SK-N-SH (cell line): ENCODE measurements at regions of chr17 and their contacts with region 1.

Region 1: DNA sequence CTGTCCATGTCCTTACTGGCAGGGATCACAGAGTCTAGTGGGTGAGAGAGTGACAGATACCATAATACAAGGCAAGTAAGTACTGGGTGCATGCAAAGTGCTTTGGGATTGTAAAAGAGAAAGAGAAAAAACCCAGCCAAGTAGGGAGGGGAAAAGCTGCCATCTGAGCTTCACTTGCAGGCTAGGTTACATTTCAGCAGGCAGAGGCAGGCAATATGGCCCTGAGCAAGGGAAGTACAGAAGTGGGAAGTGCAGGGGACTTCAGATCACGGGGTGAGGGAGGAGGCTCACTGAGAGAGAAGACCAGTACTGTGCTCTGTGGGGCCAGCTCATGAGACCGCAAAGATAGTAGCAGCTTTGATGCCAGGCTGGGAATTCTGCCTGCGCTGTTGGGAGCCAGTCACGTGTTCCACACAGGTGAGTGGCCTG is 230.6 kb downstream of the MSI2 start:
- DNase-seq: no peak
- H3K4me3 ChIP-seq: no peak overlapping the region
- H3K27ac ChIP-seq: peak overlapping the region in 1 of 2 experiments; percentile 75; a peak in 2 of 4 replicates
- H3K4me1 ChIP-seq: peaks cover 35 to 80% of the 10 kb centered on the region in 2 experiments
- H3K27me3 ChIP-seq: no peaks in the 10 kb centered on the region
- CTCF ChIP-seq: no peak
- EP300 ChIP-seq: no peak
- RAD21 ChIP-seq: no peak

Region 2: DNA sequence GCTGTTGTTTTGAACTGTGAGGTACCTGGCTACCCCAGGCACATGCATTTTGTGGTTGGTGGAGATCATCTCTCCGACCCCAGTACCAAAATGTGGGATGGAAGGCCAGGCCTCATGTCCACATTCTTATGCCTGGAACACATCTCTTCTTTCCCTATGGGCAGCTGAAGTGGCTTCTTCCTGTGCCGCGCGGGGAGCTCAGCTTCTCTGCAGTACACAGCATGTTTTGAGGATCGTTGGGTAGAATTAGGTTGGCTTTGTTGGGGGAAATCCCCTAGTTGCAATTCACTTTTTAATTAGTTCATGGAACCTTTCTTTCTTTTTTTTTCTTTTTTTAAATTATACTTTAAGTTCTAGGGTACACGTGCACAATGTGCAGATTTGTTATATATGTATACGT is 11.6 kb after region 1 on chr17:
- CTCF ChIA-PET with region 1: interaction called, 6 read pairs
- POLR2A ChIA-PET with region 1: interaction called, 11 read pairs
- DNase-seq: no peak
- H3K4me3 ChIP-seq: no peak overlapping the region
- H3K27ac ChIP-seq: no peak overlapping the region; a peak in 1 of 4 replicates
- H3K4me1 ChIP-seq: peaks cover 0 to 56% of the 10 kb centered on the region in 2 experiments; a peak in 2 of 4 replicates
- H3K27me3 ChIP-seq: no peaks in the 10 kb centered on the region
- CTCF ChIP-seq: no peak
- EP300 ChIP-seq: no peak
- RAD21 ChIP-seq: no peak